HCT116 (cell line): ENCODE measurements at regions of chr5 and their contacts with region 1.

Region 1: GRCh38 chr5:32092938-32093812 is 80.9 kb downstream of the GOLPH3 start:
- DNase-seq: peak; percentile 52
- ATAC-seq: peak; percentile 97
- H3K4me3 ChIP-seq: no peak overlapping the region
- H3K27ac ChIP-seq: no peak overlapping the region
- H3K4me1 ChIP-seq: no peaks in the 10 kb centered on the region
- H3K27me3 ChIP-seq: no peaks in the 10 kb centered on the region
- CTCF ChIP-seq: peak; percentile 56 to 87 (median 69); a peak in 5 of 6 replicates
- POLR2A ChIP-seq: no peak
- RAD21 ChIP-seq: peak; percentile 77

Region 2: GRCh38 chr5:31581498-31582099 is 511.6 kb before region 1 on chr5:
- CTCF ChIA-PET with region 1: no interaction called
- POLR2A ChIA-PET with region 1: no interaction called
- RAD21 ChIA-PET with region 1: no interaction called
- intact Hi-C with region 1: loop called (anchors 1 kb)
- DNase-seq: peak; percentile 22
- ATAC-seq: no peak
- H3K4me3 ChIP-seq: no peak overlapping the region
- H3K27ac ChIP-seq: no peak overlapping the region
- H3K4me1 ChIP-seq: no peaks in the 10 kb centered on the region
- H3K27me3 ChIP-seq: peaks cover 5% of the 10 kb centered on the region
- CTCF ChIP-seq: peak; percentile 31 to 62 (median 52); a peak in 5 of 6 replicates
- POLR2A ChIP-seq: no peak
- RAD21 ChIP-seq: peak; percentile 71

Region 3: GRCh38 chr5:31809050-31809870 is 283.9 kb before region 1 on chr5:
- CTCF ChIA-PET with region 1: interaction called, 19 read pairs
- POLR2A ChIA-PET with region 1: no interaction called
- RAD21 ChIA-PET with region 1: interaction called in 1 of 2 experiments, 3 read pairs
- intact Hi-C with region 1: no loop called
- DNase-seq: peak; percentile 68
- ATAC-seq: peak; percentile 97
- H3K4me3 ChIP-seq: no peak overlapping the region
- H3K27ac ChIP-seq: no peak overlapping the region
- H3K4me1 ChIP-seq: peaks cover 0 to 14% of the 10 kb centered on the region in 2 experiments; a peak in 2 of 4 replicates
- H3K27me3 ChIP-seq: peaks cover 9% of the 10 kb centered on the region
- CTCF ChIP-seq: peak; percentile 80 to 96 (median 84)
- POLR2A ChIP-seq: no peak
- RAD21 ChIP-seq: peak; percentile 87

Region 4: DNA sequence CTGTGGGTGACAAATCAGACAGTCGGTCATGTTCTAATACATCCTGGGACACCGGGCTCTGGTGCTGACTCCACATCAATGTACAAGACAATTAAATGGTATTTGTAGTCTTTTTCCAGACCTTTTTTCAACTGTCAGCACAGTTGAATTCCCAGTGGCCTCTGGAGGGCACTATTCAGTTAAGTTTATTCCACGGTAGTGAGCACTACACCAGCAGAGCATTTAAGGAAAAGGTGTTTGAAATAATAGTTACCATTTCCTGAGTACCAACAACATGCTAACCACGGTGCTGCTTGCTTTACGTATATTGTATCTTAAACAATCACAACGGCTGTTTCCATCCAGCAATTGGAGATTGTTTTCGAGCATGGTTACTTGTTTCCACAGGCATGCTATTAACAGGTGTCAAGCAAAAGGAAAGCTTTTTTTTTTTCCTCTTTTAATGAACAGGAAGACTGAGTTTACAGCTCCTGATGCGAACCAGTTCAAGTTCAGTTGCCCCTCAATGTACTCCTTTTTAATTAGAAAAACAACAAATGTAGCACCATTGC is 267.6 kb before region 1 on chr5:
- CTCF ChIA-PET with region 1: interaction called, 46 read pairs
- POLR2A ChIA-PET with region 1: no interaction called
- RAD21 ChIA-PET with region 1: interaction called, 5 read pairs
- intact Hi-C with region 1: loop called (anchors 1 kb)
- DNase-seq: peak; percentile 61
- ATAC-seq: peak; percentile 93
- H3K4me3 ChIP-seq: no peak overlapping the region
- H3K27ac ChIP-seq: no peak overlapping the region
- H3K4me1 ChIP-seq: no peaks in the 10 kb centered on the region
- H3K27me3 ChIP-seq: no peaks in the 10 kb centered on the region
- CTCF ChIP-seq: peak; percentile 70 to 81 (median 73)
- POLR2A ChIP-seq: no peak
- RAD21 ChIP-seq: peak; percentile 87